Body of pancreas (tissue), 4 donors: ENCODE measurements at regions of chr1 and their contacts with region 1.

Region 1: DNA sequence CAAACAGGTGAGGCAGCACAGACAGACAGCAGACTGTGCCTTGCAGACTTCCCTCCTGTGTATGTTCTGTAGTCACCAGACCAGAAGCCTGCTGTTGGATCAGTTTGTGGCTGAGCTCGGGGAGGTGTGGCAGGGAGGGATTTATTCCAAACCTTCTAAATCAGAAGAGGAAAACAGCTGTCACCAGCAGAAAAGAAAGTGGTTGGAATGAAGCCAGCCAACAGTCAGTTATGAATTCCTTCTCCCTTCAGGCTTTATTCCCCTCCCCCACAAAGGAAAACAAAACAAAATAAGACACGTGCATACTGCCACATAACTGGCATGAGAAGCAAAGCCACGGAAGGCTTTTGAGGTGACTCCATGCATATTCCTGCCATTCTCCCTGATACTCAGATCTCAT is 19.0 kb upstream of the PIGV start:
- DNase-seq: peak in 3 of 4 donors; percentile 32 to 49 (median 47)
- ATAC-seq: no peak
- H3K4me3 ChIP-seq: no peak overlapping the region
- H3K27ac ChIP-seq: peak overlapping the region in 1 of 4 donors; percentile 15
- H3K4me1 ChIP-seq: peaks cover 21% of the 10 kb centered on the region
- H3K27me3 ChIP-seq: no peaks in the 10 kb centered on the region
- CTCF ChIP-seq: no peak
- POLR2A ChIP-seq: no peak

Region 2: DNA sequence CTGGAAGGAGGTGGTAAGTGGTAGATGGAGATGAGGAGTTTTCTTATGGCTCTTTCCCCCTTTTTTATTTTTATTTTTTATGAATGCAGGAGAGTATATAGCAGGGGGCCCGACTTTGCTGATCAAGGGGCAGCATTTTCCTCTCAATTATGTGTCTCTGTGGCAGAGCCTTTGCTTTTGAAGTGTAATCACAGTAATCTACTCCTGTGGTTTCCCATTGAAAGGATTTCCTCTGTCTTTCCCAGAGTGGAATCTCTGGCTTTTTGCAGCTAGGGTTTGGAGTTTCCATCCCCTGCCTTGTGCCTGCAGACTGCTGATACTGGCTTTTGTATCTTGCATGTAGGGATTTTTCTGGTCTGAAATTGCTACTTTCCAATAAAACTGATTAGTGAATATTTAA is 43.8 kb before region 1 on chr1:
- intact Hi-C with region 1: loop called (anchors 5 kb)
- DNase-seq: no peak
- ATAC-seq: no peak
- H3K4me3 ChIP-seq: no peak overlapping the region
- H3K27ac ChIP-seq: peak overlapping the region in 1 of 4 donors; percentile 85
- H3K4me1 ChIP-seq: peaks cover 69% of the 10 kb centered on the region
- H3K27me3 ChIP-seq: no peaks in the 10 kb centered on the region
- CTCF ChIP-seq: no peak
- POLR2A ChIP-seq: no peak

Region 3: DNA sequence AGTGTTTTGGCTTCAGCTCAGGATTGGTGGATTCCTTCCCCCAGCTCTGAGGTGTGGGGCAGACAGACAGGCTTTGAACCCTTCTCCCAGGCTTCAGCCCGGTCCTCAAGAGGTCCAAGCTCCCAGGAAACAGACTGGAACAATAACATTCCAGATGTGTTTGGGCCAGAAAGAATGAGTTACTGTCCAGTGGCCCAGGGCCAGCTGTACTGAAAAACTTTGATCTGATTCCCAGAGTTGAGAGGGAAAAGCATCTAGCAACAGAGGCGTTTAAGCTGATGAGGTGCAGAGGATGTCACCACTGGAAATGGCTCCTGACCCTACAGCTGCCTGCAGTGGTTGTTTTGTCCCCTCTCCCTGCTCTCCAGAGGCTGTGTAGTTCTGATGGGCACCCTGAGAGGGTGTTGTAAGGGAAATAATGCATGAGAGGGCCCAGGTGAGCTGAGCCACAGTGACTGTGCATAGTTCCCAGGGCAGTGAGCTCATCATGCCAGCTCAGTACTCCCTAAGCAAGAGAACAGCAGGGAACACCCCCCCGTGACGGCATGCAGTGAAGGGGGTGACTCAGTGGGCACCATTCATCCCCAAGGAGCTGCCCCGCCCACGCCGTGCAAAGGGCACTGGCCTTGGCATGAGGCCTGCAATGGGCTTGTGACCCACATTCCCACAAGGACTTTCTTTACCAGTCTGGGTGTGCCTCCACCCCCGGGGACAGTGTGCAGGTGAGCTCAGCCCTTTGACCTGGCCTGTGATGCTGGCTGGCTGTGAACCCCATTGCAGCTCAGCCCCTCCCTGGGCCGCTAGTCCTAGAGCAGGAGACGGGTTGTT is 80.4 kb after region 1 on chr1:
- intact Hi-C with region 1: no loop called
- DNase-seq: peak; percentile 31 to 79 (median 40)
- ATAC-seq: peak; percentile 36
- H3K4me3 ChIP-seq: no peak overlapping the region
- H3K27ac ChIP-seq: no peak overlapping the region
- H3K4me1 ChIP-seq: no peaks in the 10 kb centered on the region
- H3K27me3 ChIP-seq: no peaks in the 10 kb centered on the region
- CTCF ChIP-seq: peak in 1 of 7 experiments; percentile 3
- POLR2A ChIP-seq: no peak